Heart right ventricle (tissue), 16 donors: ENCODE measurements at regions of chr16 and their contacts with region 1.

Region 1: GRCh38 chr16:87550496-87550961 is 51.8 kb upstream of the JPH3 start:
- DNase-seq: peak in 1 of 2 donors; percentile 57
- ATAC-seq: peak in 7 of 8 donors; percentile 37 to 57 (median 46)
- H3K4me3 ChIP-seq: no peak overlapping the region
- H3K27ac ChIP-seq: no peak overlapping the region
- H3K4me1 ChIP-seq: peaks cover 0 to 7% (median 0%) of the 10 kb centered on the region in 9 donors
- H3K27me3 ChIP-seq: peaks cover 0 to 22% (median 5%) of the 10 kb centered on the region in 7 donors
- CTCF ChIP-seq: peak; percentile 85 to 96 (median 92)

Region 2: GRCh38 chr16:87363771-87364455 is 186.6 kb before region 1 on chr16:
- intact Hi-C with region 1: no loop called
- DNase-seq: peak; percentile 44 to 58
- ATAC-seq: peak; percentile 72 to 92 (median 84)
- H3K4me3 ChIP-seq: peak overlapping the region in 3 of 10 donors; percentile 2 to 36 (median 19)
- H3K27ac ChIP-seq: peak overlapping the region; percentile 59 to 93 (median 80)
- H3K4me1 ChIP-seq: peaks cover 13 to 62% (median 45%) of the 10 kb centered on the region in 9 donors
- H3K27me3 ChIP-seq: peaks cover 0 to 49% (median 0%) of the 10 kb centered on the region in 7 donors
- CTCF ChIP-seq: no peak

Region 3: DNA sequence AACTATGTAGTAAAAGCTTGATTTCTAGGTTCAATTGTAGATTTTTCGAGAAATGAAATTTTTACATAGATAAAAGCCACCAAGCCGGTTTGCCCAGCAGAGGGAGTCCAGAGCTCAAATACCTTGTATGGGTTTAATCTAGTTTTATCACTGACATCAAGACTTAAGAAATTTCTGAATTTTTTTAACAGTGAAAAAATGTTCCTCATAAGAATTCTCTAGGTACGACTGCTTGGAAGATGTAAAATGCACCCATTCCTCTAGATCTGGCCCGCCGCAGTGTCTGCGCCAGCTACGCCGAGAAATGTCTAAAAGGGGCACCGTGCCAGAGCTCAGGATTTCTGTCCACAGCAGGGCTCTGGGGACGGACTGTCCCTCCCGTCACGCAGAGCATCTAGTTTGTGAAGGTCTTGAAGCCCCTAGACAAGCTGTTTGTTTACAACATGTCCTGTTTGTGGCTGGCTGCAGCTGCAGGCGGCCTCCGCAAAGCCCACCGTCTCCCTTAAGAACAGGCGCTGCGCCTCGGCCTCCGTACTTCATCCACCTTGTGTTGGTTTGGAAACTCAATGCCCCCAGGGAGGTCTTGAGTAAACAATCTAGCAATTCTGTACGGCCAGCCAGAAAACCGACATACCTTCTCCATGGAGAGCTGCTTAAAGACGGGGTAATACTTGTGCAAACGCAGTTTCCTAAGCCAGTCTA is 133.6 kb before region 1 on chr16:
- intact Hi-C with region 1: loop called in 5 of 10 experiments (anchors 5 to 10 kb)
- DNase-seq: no peak
- ATAC-seq: no peak
- H3K4me3 ChIP-seq: no peak overlapping the region
- H3K27ac ChIP-seq: no peak overlapping the region
- H3K4me1 ChIP-seq: peaks cover 0 to 5% (median 0%) of the 10 kb centered on the region in 9 donors
- H3K27me3 ChIP-seq: no peaks in the 10 kb centered on the region
- CTCF ChIP-seq: peak; percentile 37 to 80 (median 70)